Activated naive CD4-positive, alpha-beta T cell treated with anti-CD3 and anti-CD28 coated beads for 36 hours (primary cell): ENCODE measurements at regions of chr2 and their contacts with region 1.

Region 1: GRCh38 chr2:158174495-158174894 is 72.8 kb downstream of the UPP2 start:
- DNase-seq: no peak
- H3K4me3 Mint-ChIP-seq: no peak overlapping the region
- H3K27ac Mint-ChIP-seq: no peak overlapping the region
- H3K4me1 Mint-ChIP-seq: no peaks in the 10 kb centered on the region
- H3K27me3 Mint-ChIP-seq: peaks cover 23% of the 10 kb centered on the region

Region 2: GRCh38 chr2:157468931-157469708 is 705.4 kb before region 1 on chr2:
- CTCF ChIA-PET with region 1: no interaction called
- intact Hi-C with region 1: no loop called
- DNase-seq: peak; percentile 27
- H3K4me3 Mint-ChIP-seq: peak overlapping the region; percentile 64
- H3K27ac Mint-ChIP-seq: peak overlapping the region; percentile 99
- H3K4me1 Mint-ChIP-seq: peaks cover 94% of the 10 kb centered on the region
- H3K27me3 Mint-ChIP-seq: no peaks in the 10 kb centered on the region

Region 3: GRCh38 chr2:157890969-157891639 is 283.4 kb before region 1 on chr2:
- CTCF ChIA-PET with region 1: no interaction called
- intact Hi-C with region 1: no loop called
- DNase-seq: no peak
- H3K4me3 Mint-ChIP-seq: no peak overlapping the region
- H3K27ac Mint-ChIP-seq: peak overlapping the region; percentile 54
- H3K4me1 Mint-ChIP-seq: peaks cover 57% of the 10 kb centered on the region
- H3K27me3 Mint-ChIP-seq: no peaks in the 10 kb centered on the region

Region 4: DNA sequence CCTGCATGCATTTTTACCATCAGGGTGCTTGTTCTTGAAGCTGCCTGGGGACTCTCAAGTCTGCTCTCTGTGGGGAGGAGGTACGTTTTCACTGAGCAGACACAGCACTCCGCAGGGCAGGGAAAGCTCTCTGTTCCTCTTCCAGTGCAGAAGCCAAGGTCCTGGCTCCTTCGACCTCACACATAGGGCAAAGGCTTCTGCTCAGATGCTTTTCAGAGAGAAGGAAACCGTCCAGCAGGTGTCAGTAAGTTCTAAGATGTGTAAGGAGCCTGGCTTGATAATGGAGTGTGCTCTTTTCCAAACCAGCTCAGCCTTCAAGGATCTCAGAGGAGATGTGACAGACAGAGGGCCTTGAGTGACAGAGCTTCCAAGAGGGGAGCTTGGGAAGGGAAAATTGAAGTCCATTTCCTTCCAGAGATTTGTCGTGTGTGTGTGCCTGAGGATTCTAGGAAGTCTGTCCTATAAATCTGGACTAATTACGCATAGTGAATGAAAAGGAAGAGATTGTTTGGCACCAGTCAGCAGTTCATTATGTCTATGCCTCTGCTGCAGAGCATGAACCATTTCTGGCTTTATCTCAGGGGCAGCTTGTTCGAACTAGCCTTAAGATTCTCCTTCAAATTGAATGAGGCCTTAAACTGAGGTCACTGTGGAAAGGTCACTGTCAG is 140.2 kb before region 1 on chr2:
- CTCF ChIA-PET with region 1: interaction called, 6 read pairs
- intact Hi-C with region 1: loop called (anchors 5 kb)
- DNase-seq: peak; percentile 37
- H3K4me3 Mint-ChIP-seq: no peak overlapping the region
- H3K27ac Mint-ChIP-seq: no peak overlapping the region
- H3K4me1 Mint-ChIP-seq: no peaks in the 10 kb centered on the region
- H3K27me3 Mint-ChIP-seq: peaks cover 6% of the 10 kb centered on the region